ENCODE measurements at regions of chr1 and their contacts with region 1.

Region 1: DNA sequence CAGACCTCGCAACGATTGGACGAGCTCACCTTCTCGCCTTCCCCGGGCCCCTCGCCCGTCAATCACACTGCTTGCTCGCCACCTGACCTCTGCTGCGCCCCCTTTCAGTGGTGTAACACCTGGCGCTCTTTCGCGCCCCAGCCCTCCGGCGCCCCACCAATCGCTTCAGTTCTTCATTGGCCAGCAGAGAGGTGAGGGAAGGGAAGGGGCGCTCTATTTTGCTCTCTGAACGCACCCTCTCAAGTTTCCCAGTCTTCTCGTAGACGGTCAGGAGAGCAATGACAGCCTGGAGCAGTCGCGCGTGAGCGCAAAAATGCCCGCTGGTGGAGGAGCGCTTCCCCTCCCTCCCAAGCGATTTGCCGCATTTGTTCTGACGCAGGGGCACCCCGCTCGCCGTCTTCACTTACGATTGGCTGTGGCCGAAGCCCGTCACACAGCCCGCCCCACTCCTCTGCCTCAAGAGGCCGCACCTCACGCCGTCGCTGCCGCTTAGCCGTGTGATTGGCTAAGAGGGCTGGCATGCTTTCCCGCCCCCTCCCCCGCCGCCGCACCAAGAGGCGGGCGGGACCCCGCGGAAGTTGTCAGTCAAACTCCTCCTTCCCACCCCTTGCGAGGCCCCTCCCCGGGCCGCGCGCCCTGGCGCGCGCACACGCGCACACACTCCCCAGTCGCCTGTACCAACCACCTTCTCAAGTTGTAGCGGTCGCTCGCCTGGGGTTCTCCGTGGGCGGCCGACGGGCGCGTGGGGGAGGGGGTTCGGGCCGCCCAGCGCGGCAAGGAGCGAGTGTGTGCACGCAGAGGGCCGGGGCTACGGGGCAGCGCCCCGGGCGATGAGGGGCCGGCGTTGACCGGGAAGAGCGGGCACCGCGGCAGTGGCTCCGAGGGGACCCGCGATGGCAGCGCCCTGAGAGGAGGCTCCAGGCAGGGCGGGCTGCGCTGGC is at the start of gene PPP2R5A:
- DNase-seq: peak; percentile 96 to 100 (median 99)
- ATAC-seq: peak; percentile 85 to 90 (median 86)
- H3K4me3 ChIP-seq: peak within 1 kb of the TSS; percentile 97 to 99
- H3K4me3 Mint-ChIP-seq: peak within 1 kb of the TSS; percentile 95 to 99 (median 97)
- H3K27ac ChIP-seq: peak within 1 kb of the TSS; percentile 87
- H3K27ac Mint-ChIP-seq: peak within 1 kb of the TSS; percentile 96 to 97
- H3K4me1 ChIP-seq: peaks cover 22 to 30% of the 10 kb centered on the region in 2 experiments
- H3K4me1 Mint-ChIP-seq: peaks cover 37 to 56% (median 41%) of the 10 kb centered on the region in 3 donors
- H3K27me3 ChIP-seq: peaks cover 0 to 2% of the 10 kb centered on the region in 2 experiments
- H3K27me3 Mint-ChIP-seq: no peaks in the 10 kb centered on the region
- total RNA-seq, gene PPP2R5A: 40.4 to 51.1 (median 46.7) TPM

Region 2: GRCh38 chr1:212097360-212097759 is 187.7 kb before region 1 on chr1:
- CTCF ChIA-PET with region 1: no interaction called
- POLR2A ChIA-PET with region 1: interaction called in 1 of 2 experiments, 12 read pairs
- DNase-seq: no peak
- ATAC-seq: no peak
- H3K4me3 ChIP-seq: no peak overlapping the region
- H3K4me3 Mint-ChIP-seq: no peak overlapping the region
- H3K27ac ChIP-seq: no peak overlapping the region
- H3K27ac Mint-ChIP-seq: no peak overlapping the region
- H3K4me1 ChIP-seq: no peaks in the 10 kb centered on the region
- H3K4me1 Mint-ChIP-seq: peaks cover 0 to 5% (median 0%) of the 10 kb centered on the region in 3 donors
- H3K27me3 ChIP-seq: no peaks in the 10 kb centered on the region
- H3K27me3 Mint-ChIP-seq: no peaks in the 10 kb centered on the region

Region 3: GRCh38 chr1:212205843-212206242 is 79.2 kb before region 1 on chr1:
- CTCF ChIA-PET with region 1: no interaction called
- POLR2A ChIA-PET with region 1: no interaction called
- DNase-seq: no peak
- ATAC-seq: no peak
- H3K4me3 ChIP-seq: no peak overlapping the region
- H3K4me3 Mint-ChIP-seq: no peak overlapping the region
- H3K27ac ChIP-seq: no peak overlapping the region
- H3K27ac Mint-ChIP-seq: no peak overlapping the region
- H3K4me1 ChIP-seq: peaks cover 0 to 3% of the 10 kb centered on the region in 2 experiments
- H3K4me1 Mint-ChIP-seq: peaks cover 2 to 9% (median 7%) of the 10 kb centered on the region in 3 donors
- H3K27me3 ChIP-seq: no peaks in the 10 kb centered on the region
- H3K27me3 Mint-ChIP-seq: no peaks in the 10 kb centered on the region

Region 4: DNA sequence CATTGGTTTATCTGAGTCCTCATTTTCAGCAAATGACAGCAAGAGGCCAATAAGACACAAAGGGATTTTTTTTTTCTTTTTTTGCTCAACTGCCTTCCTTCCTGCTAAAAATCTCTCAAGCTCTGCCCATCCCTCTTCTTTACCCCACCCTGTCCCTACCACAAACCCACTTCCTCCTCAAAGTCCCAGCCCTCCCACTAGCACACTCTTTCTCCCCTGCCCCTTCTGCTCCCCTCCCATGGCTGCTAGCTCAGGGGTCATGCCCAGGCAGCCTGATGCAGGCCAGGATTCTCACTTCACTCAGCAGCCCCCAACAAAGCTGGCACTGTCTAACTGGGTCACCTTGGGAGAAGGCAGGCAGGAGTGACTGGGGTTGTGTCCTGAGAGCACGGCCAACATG is 28.6 kb before region 1 on chr1:
- CTCF ChIA-PET with region 1: interaction called, 3 read pairs
- POLR2A ChIA-PET with region 1: interaction called, 3 to 11 read pairs
- DNase-seq: peak in 32 of 35 experiments; percentile 5 to 68 (median 22)
- ATAC-seq: peak; percentile 80 to 89 (median 82)
- H3K4me3 ChIP-seq: no peak overlapping the region
- H3K4me3 Mint-ChIP-seq: peak overlapping the region in 2 of 3 donors; percentile 44 to 81
- H3K27ac ChIP-seq: peak overlapping the region; percentile 64
- H3K27ac Mint-ChIP-seq: peak overlapping the region; percentile 76
- H3K4me1 ChIP-seq: peaks cover 36 to 59% of the 10 kb centered on the region in 2 experiments
- H3K4me1 Mint-ChIP-seq: peaks cover 69 to 89% (median 84%) of the 10 kb centered on the region in 3 donors
- H3K27me3 ChIP-seq: no peaks in the 10 kb centered on the region
- H3K27me3 Mint-ChIP-seq: no peaks in the 10 kb centered on the region

Measured in T-cell (primary cell).